K562 (cell line): ENCODE measurements at regions of chr1 and their contacts with region 1.

Region 1: GRCh38 chr1:36088575-36089443 is at the start of gene ADPRS:
- DNase-seq: peak; percentile 95 to 97 (median 96)
- ATAC-seq: peak; percentile 94
- H3K4me3 ChIP-seq: peak within 1 kb of the TSS; percentile 92
- H3K27ac ChIP-seq: peak within 1 kb of the TSS; percentile 70
- H3K4me1 ChIP-seq: peaks cover 18 to 40% of the 10 kb centered on the region in 2 experiments; a peak in 4 of 5 replicates
- H3K27me3 ChIP-seq: no peaks in the 10 kb centered on the region
- CTCF ChIP-seq: peak; percentile 97 to 99 (median 98)
- EP300 ChIP-seq: peak; percentile 56
- POLR2A ChIP-seq: peak; percentile 98
- RAD21 ChIP-seq: peak; percentile 40 to 63; a peak in 3 of 4 replicates
- polyA plus RNA-seq, gene ADPRS: 5.9 to 8.4 TPM

Region 2: DNA sequence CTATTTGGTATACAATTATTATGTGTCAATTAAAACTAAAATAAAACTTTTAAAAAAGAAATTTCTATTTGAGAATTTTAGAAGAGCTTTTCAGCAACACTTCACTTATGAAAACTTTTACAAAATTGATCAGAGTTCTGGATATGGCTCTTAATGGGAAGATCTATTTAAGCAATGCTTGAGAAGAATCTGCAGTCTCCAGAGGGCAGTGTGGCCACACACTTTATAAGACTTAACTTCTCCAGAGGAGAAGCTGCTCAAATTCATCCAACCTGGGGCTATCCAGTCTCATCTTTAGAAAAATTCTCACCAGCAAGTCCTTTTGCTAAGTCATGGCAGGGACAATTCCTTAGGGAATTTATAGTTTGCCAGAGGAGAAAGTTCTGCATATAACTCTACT is 231.0 kb before region 1 on chr1:
- CTCF ChIA-PET with region 1: interaction called, 3 read pairs
- POLR2A ChIA-PET with region 1: no interaction called
- in situ Hi-C with region 1: no loop called
- intact Hi-C with region 1: loop called (anchors 5 kb)
- DNase-seq: peak in 1 of 4 experiments; percentile 63
- ATAC-seq: peak; percentile 71
- H3K4me3 ChIP-seq: no peak overlapping the region
- H3K27ac ChIP-seq: no peak overlapping the region
- H3K4me1 ChIP-seq: no peaks in the 10 kb centered on the region
- H3K27me3 ChIP-seq: no peaks in the 10 kb centered on the region
- CTCF ChIP-seq: peak; percentile 41 to 66 (median 41); a peak in 4 of 6 replicates
- EP300 ChIP-seq: no peak
- POLR2A ChIP-seq: no peak
- RAD21 ChIP-seq: peak; percentile 40 to 72

Region 3: DNA sequence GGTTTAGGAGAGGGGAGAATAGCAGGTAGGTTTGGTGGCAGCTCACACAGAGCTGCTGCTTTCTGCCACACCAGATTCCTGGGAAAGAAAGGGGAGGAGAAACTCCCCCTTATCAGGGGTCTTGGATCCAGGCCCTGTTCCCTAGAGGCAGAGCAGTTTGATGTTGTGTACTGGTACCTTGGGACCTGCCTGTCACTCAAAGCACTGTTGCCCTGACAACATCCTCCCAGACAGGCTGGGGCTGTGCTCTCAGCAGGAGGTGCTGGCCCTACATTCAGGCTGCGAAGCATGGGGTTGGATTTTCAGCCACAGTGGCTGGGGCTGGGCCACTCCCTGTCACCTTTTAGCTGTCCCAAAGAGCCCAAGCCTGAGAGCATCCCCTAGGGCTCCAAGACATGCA is 757.5 kb after region 1 on chr1:
- CTCF ChIA-PET with region 1: no interaction called
- POLR2A ChIA-PET with region 1: no interaction called
- in situ Hi-C with region 1: no loop called
- intact Hi-C with region 1: no loop called
- DNase-seq: no peak
- ATAC-seq: peak; percentile 46
- H3K4me3 ChIP-seq: no peak overlapping the region
- H3K27ac ChIP-seq: no peak overlapping the region
- H3K4me1 ChIP-seq: no peaks in the 10 kb centered on the region
- H3K27me3 ChIP-seq: peaks cover 31 to 74% of the 10 kb centered on the region in 2 experiments
- CTCF ChIP-seq: no peak
- EP300 ChIP-seq: no peak
- POLR2A ChIP-seq: no peak
- RAD21 ChIP-seq: no peak